BJ (cell line): ENCODE measurements at regions of chr5 and their contacts with region 1.

Region 1: DNA sequence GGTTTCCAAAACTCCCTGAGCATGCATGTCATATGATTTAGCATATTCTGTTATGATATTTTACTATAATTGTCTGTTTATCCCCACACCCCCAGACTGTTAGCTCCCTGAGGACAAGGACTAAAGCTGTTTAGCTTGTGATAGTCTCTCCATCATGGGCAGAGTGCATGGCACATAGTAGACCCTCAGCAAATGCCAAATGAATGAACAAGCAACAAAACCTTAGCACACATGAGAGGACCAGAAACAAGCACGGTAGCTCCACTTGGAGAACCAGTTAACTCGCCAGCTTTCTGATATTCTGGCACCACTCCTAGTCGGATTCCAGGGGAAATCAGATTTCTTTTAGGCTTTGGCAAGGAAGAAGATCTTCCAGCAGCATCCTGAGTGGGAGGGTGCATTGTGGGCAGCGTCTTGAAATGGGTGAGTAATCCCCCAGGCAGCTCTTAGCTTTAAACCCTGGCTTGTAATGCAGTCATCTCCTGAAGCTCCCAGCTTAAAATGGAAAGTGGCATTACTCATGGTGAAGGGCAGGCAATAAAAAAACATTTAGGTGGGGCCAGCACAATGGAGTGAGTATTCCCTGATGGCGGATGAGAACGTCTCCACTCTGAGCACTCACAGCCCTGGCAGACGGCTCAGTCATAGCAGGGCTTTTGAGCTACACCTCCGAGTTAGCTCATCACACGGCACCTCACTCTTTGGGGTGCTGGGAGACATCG is 41.1 kb downstream of the FGF1 start:
- DNase-seq: peak; percentile 99
- H3K4me3 ChIP-seq: no peak overlapping the region
- H3K27me3 ChIP-seq: no peaks in the 10 kb centered on the region
- CTCF ChIP-seq: no peak

Region 2: DNA sequence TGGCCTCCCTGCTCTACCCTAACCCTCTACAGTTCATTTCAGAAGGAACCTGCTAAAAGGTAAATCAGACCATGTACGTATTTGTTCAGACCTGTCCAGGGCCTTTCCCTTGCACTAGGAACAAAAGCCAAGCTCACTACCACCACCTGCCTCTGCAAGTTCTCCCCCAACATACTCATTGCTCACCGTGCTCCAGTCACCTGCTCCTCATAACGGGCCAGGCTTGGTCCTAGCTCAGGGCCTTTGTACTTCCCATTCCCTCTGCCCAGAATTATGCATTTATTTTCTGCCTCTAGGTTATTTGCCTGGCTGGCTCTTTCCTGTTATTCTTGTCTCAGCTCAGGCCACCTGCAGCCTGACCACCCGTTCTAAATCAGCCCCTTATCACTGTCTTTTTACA is 45.9 kb after region 1 on chr5:
- CTCF ChIA-PET with region 1: interaction called, 385 read pairs
- POLR2A ChIA-PET with region 1: interaction called, 12 read pairs
- DNase-seq: no peak
- H3K4me3 ChIP-seq: no peak overlapping the region
- H3K27me3 ChIP-seq: peaks cover 2% of the 10 kb centered on the region; the same call in 1 of the 2 replicates
- CTCF ChIP-seq: no peak

Region 3: DNA sequence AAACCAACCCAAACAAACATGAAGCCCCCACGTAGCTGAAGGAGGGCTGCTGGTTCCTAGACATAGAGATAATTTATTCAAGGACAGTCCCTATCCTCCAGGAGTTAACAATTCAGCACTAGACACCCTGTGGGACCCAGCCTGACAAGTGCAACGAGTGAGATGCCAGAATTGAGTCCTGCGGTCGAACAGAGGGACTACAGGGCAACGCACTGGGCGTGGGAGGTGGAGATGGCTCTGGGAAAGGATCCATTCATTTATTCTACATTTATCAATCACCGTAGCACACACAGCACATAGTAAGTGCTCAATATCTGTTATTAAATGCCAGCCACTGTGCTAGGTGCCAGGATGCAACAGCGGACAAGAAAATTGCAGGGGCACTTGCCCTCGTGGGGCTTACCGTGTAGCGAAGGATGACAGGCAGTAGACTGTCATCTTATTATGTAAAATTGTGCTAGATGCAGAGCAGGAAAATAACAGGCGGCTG is 124.5 kb after region 1 on chr5:
- CTCF ChIA-PET with region 1: no interaction called
- POLR2A ChIA-PET with region 1: no interaction called
- DNase-seq: no peak
- H3K4me3 ChIP-seq: peak overlapping the region; percentile 65
- H3K27me3 ChIP-seq: 0 out of 2 replicates have a peak, but pooled peaks cover 7% of the 10 kb centered on the region
- CTCF ChIP-seq: no peak